ENCODE measurements at regions of chr1 and their contacts with region 1.

Region 1: DNA sequence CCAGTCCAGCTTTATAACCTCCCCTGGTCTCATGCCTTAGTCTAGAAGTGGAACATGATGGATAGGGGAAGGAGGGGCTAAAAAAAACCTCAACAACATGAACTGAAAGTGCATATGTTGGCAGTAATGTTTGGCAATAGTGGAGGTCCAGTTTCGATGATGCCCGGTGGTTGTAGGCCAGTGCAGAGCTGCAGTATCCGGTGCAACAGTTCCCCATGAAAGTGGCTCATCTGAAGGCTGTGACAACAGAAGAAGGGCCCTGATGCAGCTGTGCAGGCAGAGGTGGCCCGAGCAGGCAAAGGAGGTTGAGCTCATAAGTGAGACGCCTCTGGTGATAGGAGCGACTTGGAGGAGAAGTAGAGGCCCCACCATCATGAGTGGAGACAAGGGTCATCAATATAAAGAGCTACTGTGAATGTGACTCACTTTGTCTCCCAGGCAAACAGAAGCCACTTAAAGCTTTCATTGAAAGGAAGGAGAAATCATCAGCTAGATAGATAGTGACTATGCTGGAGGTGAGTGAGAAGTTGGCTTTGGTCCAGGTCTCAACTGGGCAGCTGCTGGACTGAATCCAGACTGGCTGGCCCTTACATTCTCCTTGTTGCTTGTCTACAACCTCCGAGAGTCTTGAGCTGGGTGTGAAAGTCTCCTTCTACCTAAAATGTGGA is 10.2 kb upstream of the CREG1 start:
- H3K4me3 Mint-ChIP-seq: peak overlapping the region; percentile 34
- H3K27ac Mint-ChIP-seq: peak overlapping the region; percentile 89
- H3K4me1 Mint-ChIP-seq: peaks cover 66% of the 10 kb centered on the region
- H3K27me3 Mint-ChIP-seq: no peaks in the 10 kb centered on the region

Region 2: GRCh38 chr1:166410083-166410385 is 1153.7 kb before region 1 on chr1:
- intact Hi-C with region 1: no loop called
- H3K4me3 Mint-ChIP-seq: no peak overlapping the region
- H3K27ac Mint-ChIP-seq: no peak overlapping the region
- H3K4me1 Mint-ChIP-seq: no peaks in the 10 kb centered on the region
- H3K27me3 Mint-ChIP-seq: no peaks in the 10 kb centered on the region

Region 3: GRCh38 chr1:167553136-167554027 is 10.3 kb before region 1 on chr1 and contains the start of gene CREG1:
- intact Hi-C with region 1: no loop called
- H3K4me3 Mint-ChIP-seq: peak within 1 kb of the TSS; percentile 92
- H3K27ac Mint-ChIP-seq: peak within 1 kb of the TSS; percentile 87
- H3K4me1 Mint-ChIP-seq: peaks cover 53% of the 10 kb centered on the region
- H3K27me3 Mint-ChIP-seq: no peaks in the 10 kb centered on the region

Region 4: DNA sequence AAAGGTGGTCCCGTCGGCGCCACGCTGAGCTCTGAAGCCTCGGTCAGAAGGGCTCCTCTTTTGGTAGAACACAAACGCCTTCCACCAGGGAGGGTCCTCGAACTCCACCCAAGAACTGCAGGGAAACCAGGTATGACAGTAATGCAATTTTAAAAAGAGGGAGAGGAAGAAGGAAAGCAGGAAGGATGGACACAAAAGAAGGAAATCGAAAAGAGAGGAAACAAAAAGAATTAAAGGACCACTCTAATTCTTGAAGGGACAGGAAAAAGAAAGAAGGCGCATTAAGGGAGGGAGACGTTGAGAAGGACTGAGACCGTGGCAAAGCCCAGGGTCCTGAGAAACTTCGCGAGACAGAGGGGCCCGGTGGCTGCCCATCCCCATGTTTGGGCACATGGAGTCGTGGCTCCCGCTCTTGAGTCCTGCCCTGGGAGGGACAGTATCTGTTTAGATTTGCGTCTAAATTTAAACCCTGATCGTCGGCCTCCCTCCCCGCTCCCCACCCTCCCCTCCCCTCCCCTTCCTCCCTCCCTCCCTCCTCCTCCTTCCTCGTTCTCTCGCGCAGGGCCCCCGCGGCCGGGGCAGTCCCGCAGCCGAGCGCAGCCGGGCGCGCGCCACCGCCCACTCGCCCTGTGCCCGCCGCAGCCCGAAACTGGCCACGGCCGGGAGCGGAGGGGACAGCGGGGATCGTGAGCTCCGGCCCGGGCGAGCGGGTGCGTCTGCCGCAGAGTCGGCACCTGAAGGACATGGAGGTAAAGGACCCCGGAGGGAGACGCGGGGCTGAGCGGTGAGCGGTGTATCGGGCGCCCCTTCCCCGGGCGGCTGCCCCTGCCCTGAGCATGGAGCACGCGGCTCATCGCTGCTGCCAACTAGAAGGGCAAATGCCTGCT is 66.2 kb after region 1 on chr1 and contains the start of gene RCSD1:
- intact Hi-C with region 1: loop called (anchors 5 kb)
- H3K4me3 Mint-ChIP-seq: peak within 1 kb of the TSS; percentile 75
- H3K27ac Mint-ChIP-seq: peak within 1 kb of the TSS; percentile 81
- H3K4me1 Mint-ChIP-seq: peaks cover 76% of the 10 kb centered on the region
- H3K27me3 Mint-ChIP-seq: no peaks in the 10 kb centered on the region

Region 5: GRCh38 chr1:167687919-167688519 is 124.3 kb after region 1 on chr1:
- intact Hi-C with region 1: loop called (anchors 5 kb)
- H3K4me3 Mint-ChIP-seq: no peak overlapping the region
- H3K27ac Mint-ChIP-seq: no peak overlapping the region
- H3K4me1 Mint-ChIP-seq: peaks cover 25% of the 10 kb centered on the region
- H3K27me3 Mint-ChIP-seq: no peaks in the 10 kb centered on the region

Measured in dendritic cell treated with granulocyte-macrophage colony-stimulating factor and Interleukin-4, amounts not matched to agents 40 ng/mL and 50 ng/mL, for 4 days (primary cell).